ENCODE measurements at regions of chr1 and their contacts with region 1.

Region 1: GRCh38 chr1:232978091-232978634 is 27.8 kb downstream of the NTPCR start:
- DNase-seq: peak; percentile 74
- H3K4me3 ChIP-seq: no peak overlapping the region
- H3K27ac ChIP-seq: peak overlapping the region in 1 of 2 experiments; percentile 82; a peak in 2 of 4 replicates
- H3K4me1 ChIP-seq: peaks cover 0 to 46% of the 10 kb centered on the region in 2 experiments; a peak in 2 of 4 replicates
- H3K27me3 ChIP-seq: no peaks in the 10 kb centered on the region
- CTCF ChIP-seq: no peak
- EP300 ChIP-seq: peak in 1 of 2 experiments; percentile 89; a peak in 2 of 4 replicates
- RAD21 ChIP-seq: 0 out of 2 replicates have a peak, but pooled peaks have one; percentile 17

Region 2: GRCh38 chr1:232952514-232953499 is 25.4 kb before region 1 on chr1:
- CTCF ChIA-PET with region 1: interaction called, 15 read pairs
- POLR2A ChIA-PET with region 1: no interaction called
- DNase-seq: peak; percentile 66
- H3K4me3 ChIP-seq: no peak overlapping the region
- H3K27ac ChIP-seq: peak overlapping the region in 1 of 2 experiments; percentile 75; a peak in 2 of 4 replicates
- H3K4me1 ChIP-seq: peaks cover 0 to 20% of the 10 kb centered on the region in 2 experiments; a peak in 3 of 4 replicates
- H3K27me3 ChIP-seq: no peaks in the 10 kb centered on the region
- CTCF ChIP-seq: peak; percentile 62
- EP300 ChIP-seq: no peak
- RAD21 ChIP-seq: peak; percentile 65

Region 3: DNA sequence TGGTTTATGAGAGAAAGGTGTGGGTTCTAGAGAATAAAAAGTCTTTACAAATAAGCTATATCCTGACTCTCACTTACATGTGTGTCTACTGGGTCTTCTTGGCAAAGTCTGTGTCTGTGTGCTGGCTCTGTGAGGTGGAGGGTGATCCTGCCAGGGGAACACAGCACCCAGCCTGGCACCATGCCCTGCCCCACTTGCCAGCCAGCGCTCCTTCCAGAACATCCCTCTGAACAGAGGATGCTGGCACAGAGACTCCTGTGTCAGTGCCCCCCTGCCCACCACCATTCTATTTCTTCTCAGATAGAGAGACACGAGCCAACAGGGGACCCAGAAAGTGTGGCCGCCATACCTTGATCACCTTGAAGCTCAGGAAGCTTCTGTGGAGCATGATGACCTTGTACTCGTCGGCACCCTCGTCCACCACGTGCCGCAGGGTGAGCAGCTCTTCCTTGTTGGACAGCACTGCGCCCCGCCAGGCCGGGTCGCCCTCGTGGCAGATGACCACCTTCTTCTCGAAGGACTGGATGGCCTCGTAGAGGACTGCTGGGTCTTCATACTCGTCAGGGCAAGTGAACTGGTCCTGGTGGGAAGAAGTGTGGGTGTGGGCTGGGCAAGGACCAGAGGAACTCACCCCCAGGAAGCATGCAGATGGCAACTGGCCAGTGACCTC is 21.9 kb after region 1 on chr1:
- CTCF ChIA-PET with region 1: no interaction called
- POLR2A ChIA-PET with region 1: no interaction called
- DNase-seq: no peak
- H3K4me3 ChIP-seq: no peak overlapping the region
- H3K27ac ChIP-seq: no peak overlapping the region
- H3K4me1 ChIP-seq: peaks cover 0 to 4% of the 10 kb centered on the region in 2 experiments; a peak in 1 of 4 replicates
- H3K27me3 ChIP-seq: no peaks in the 10 kb centered on the region
- CTCF ChIP-seq: no peak
- EP300 ChIP-seq: no peak
- RAD21 ChIP-seq: no peak

Region 4: DNA sequence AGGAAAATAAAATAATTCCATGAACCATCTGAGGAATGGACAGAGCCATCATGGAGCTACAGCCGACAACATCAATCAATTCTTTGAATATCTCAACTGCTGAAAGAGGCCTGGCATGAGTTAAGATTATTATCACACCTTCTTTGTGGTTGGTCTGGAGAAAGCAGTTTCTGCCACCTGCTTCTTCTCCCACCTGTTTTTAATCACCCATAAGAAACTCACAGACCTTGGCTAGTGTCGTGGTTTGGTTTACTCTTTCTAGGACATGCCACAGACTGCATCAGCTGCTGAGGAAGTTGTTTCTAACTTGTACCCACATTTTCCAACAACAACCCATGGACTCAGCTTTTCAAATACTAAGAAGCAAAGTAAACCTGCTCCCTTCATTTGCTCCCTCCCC is 37.8 kb after region 1 on chr1:
- CTCF ChIA-PET with region 1: no interaction called
- POLR2A ChIA-PET with region 1: no interaction called
- DNase-seq: no peak
- H3K4me3 ChIP-seq: no peak overlapping the region
- H3K27ac ChIP-seq: no peak overlapping the region
- H3K4me1 ChIP-seq: peaks cover 0 to 3% of the 10 kb centered on the region in 2 experiments; a peak in 1 of 4 replicates
- H3K27me3 ChIP-seq: no peaks in the 10 kb centered on the region
- CTCF ChIP-seq: no peak
- EP300 ChIP-seq: peak in 1 of 2 experiments; percentile 70; a peak in 1 of 4 replicates
- RAD21 ChIP-seq: no peak

Region 5: GRCh38 chr1:233094691-233095090 is 116.5 kb after region 1 on chr1:
- CTCF ChIA-PET with region 1: no interaction called
- POLR2A ChIA-PET with region 1: no interaction called
- DNase-seq: no peak
- H3K4me3 ChIP-seq: no peak overlapping the region
- H3K27ac ChIP-seq: no peak overlapping the region
- H3K4me1 ChIP-seq: peaks cover 0 to 2% of the 10 kb centered on the region in 2 experiments; a peak in 3 of 4 replicates
- H3K27me3 ChIP-seq: no peaks in the 10 kb centered on the region
- CTCF ChIP-seq: no peak
- EP300 ChIP-seq: no peak
- RAD21 ChIP-seq: no peak

Measured in SK-N-SH (cell line).